Naive thymus-derived CD4-positive, alpha-beta T cell (primary cell): ENCODE measurements at regions of chr1 and their contacts with region 1.

Region 1: DNA sequence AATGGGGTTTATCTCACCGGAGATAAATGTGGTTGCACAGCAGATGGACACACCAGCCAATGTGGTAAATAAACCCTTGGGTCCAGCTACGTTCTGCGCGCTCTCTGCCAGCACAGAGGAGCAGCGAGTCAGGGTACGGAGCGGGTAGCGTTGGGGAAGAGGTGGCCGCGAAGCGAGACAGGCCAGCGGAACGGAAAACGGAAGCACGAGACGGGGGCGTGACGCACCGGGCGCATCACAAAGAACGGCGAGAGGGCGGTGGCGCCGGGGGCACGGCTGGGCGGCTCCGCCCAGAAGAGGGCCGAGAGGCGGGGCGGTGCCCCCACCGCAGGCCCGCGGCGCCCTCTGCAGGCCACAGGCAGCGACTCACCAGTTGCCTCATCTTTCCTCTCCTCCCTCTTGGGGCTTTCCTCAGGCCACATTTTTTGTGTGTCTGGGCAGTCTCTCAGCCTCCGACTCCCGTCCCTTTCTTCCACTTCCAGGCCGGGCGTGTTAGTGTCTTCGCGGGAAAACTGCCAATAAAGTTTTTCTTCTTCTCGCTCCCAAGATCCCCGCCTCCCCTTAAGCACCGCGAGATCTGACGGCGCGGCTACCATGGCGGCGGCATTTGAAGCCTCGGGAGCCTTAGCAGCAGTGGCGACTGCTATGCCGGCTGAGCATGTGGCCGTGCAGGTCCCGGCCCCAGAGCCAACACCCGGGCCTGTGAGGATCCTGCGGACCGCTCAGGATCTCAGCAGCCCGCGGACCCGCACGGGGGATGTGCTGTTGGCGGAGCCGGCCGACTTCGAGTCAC is at the start of gene DDX20:
- DNase-seq: peak; percentile 92 to 97 (median 95)
- ATAC-seq: peak; percentile 97
- H3K4me3 ChIP-seq: peak within 1 kb of the TSS; percentile 87
- H3K4me3 Mint-ChIP-seq: peak within 1 kb of the TSS; percentile 86 to 100 (median 94)
- H3K27ac ChIP-seq: peak within 1 kb of the TSS; percentile 92
- H3K27ac Mint-ChIP-seq: peak within 1 kb of the TSS; percentile 94 to 100 (median 99)
- H3K4me1 ChIP-seq: peaks cover 4 to 18% of the 10 kb centered on the region in 2 donors
- H3K4me1 Mint-ChIP-seq: peaks cover 24 to 49% (median 39%) of the 10 kb centered on the region in 7 donors
- H3K27me3 ChIP-seq: no peaks in the 10 kb centered on the region
- H3K27me3 Mint-ChIP-seq: peaks cover 0 to 2% (median 0%) of the 10 kb centered on the region in 5 donors
- total RNA-seq, gene DDX20: 12.7 to 27.0 (median 18.7) TPM

Region 2: GRCh38 chr1:110872745-110873720 is 882.5 kb before region 1 on chr1 and contains the start of gene CD53:
- CTCF ChIA-PET with region 1: no interaction called
- POLR2A ChIA-PET with region 1: no interaction called
- intact Hi-C with region 1: loop called (anchors 2 to 10 kb)
- DNase-seq: peak in 8 of 9 donors; percentile 19 to 82 (median 76)
- ATAC-seq: peak; percentile 86
- H3K4me3 ChIP-seq: peak within 1 kb of the TSS; percentile 84
- H3K4me3 Mint-ChIP-seq: peak within 1 kb of the TSS; percentile 94 to 100 (median 96)
- H3K27ac ChIP-seq: peak within 1 kb of the TSS; percentile 91
- H3K27ac Mint-ChIP-seq: peak within 1 kb of the TSS; percentile 95 to 99 (median 98)
- H3K4me1 ChIP-seq: peaks cover 24 to 48% of the 10 kb centered on the region in 2 donors
- H3K4me1 Mint-ChIP-seq: peaks cover 34 to 72% (median 52%) of the 10 kb centered on the region in 7 donors
- H3K27me3 ChIP-seq: no peaks in the 10 kb centered on the region
- H3K27me3 Mint-ChIP-seq: no peaks in the 10 kb centered on the region
- total RNA-seq, gene CD53: 237 to 513 (median 287) TPM

Region 3: GRCh38 chr1:111214074-111214801 is 541.3 kb before region 1 on chr1:
- CTCF ChIA-PET with region 1: no interaction called
- POLR2A ChIA-PET with region 1: no interaction called
- intact Hi-C with region 1: loop called in 1 of 2 experiments (anchors 1 kb)
- DNase-seq: no peak
- ATAC-seq: no peak
- H3K4me3 ChIP-seq: peak overlapping the region; percentile 12
- H3K4me3 Mint-ChIP-seq: peak overlapping the region; percentile 60 to 88 (median 81)
- H3K27ac ChIP-seq: peak overlapping the region; percentile 75
- H3K27ac Mint-ChIP-seq: peak overlapping the region; percentile 94 to 100 (median 97)
- H3K4me1 ChIP-seq: peaks cover 65 to 67% of the 10 kb centered on the region in 2 donors
- H3K4me1 Mint-ChIP-seq: peaks cover 66 to 98% (median 93%) of the 10 kb centered on the region in 7 donors
- H3K27me3 ChIP-seq: no peaks in the 10 kb centered on the region
- H3K27me3 Mint-ChIP-seq: peaks cover 0 to 2% (median 0%) of the 10 kb centered on the region in 5 donors

Region 4: DNA sequence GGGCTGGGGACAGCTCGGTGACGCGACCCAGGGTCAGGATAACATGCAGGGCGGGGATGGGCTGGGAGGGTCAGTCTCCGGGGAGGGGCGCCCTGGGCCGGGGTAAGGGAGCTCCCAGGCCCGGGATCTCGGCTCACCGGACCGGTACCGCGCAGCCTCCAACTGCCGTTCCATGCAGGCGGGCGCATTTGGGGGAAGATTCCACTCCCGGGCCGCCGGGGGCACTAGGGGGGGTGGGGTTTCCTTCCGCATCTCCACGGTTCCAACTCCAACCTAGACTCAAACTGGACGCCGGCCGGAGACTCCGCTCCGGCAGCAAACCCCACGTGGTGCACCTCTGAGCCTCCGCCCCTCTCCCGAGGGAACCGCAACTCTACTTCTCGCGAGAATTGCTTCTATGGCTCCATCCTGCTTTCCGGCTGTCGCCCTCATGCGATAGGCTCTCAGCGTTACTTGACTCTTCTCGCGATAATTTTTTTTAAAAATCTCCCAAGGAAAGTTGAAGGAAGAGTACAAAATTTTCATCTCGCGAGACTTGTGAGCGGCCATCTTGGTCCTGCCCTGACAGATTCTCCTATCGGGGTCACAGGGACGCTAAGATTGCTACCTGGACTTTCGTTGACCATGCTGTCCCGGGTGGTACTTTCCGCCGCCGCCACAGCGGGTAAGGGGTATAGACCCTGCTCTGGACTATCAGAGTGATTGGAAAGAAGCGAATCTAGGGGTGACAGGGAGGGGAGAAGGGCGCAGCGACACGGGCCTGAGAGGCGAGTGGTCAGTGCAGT is 306.4 kb before region 1 on chr1 and contains the starts of genes ATP5PB and WDR77:
- CTCF ChIA-PET with region 1: no interaction called
- POLR2A ChIA-PET with region 1: interaction called, 3 read pairs
- intact Hi-C with region 1: loop called (anchors 1 kb)
- DNase-seq: peak; percentile 66 to 97 (median 94)
- ATAC-seq: peak; percentile 98
- H3K4me3 ChIP-seq: peak within 1 kb of the TSS; percentile 89
- H3K4me3 Mint-ChIP-seq: peak within 1 kb of the TSS; percentile 97 to 100 (median 100)
- H3K27ac ChIP-seq: peak within 1 kb of the TSS; percentile 98
- H3K27ac Mint-ChIP-seq: peak within 1 kb of the TSS; percentile 95 to 100 (median 99)
- H3K4me1 ChIP-seq: peaks cover 51 to 55% of the 10 kb centered on the region in 2 donors
- H3K4me1 Mint-ChIP-seq: peaks cover 43 to 92% (median 78%) of the 10 kb centered on the region in 7 donors
- H3K27me3 ChIP-seq: no peaks in the 10 kb centered on the region
- H3K27me3 Mint-ChIP-seq: no peaks in the 10 kb centered on the region
- total RNA-seq, gene ATP5PB: 64.9 to 298 (median 98.7) TPM
- total RNA-seq, gene WDR77: 20.7 to 39.9 (median 29.5) TPM

Region 5: DNA sequence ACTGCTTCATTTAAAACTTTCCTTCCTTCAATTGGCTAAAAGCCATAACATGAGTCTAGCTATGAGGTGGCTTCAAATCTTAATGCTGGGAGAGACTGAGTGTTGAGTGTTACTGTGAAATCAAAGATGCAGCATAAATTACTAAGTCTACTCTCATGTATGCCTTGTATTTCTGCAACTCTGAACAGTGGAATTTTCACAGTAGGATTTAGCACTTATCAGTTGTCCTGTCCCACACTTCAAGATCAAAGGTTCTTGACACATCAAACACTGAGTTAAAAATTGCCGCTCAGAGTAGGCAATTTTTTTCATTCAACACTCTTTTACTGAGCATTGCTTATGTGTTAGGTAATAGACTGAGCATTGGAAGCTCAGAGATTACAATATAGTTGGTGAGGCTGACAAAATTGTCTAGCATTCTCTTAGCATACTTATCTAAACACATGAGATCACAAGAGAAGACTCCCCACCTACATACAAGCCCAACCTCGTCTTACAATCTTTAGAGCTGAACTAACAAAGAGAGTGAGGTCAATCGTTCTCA is 195.7 kb before region 1 on chr1:
- CTCF ChIA-PET with region 1: no interaction called
- POLR2A ChIA-PET with region 1: no interaction called
- intact Hi-C with region 1: loop called in 1 of 2 experiments (anchors 5 kb)
- DNase-seq: no peak
- ATAC-seq: no peak
- H3K4me3 ChIP-seq: no peak overlapping the region
- H3K4me3 Mint-ChIP-seq: no peak overlapping the region
- H3K27ac ChIP-seq: no peak overlapping the region
- H3K27ac Mint-ChIP-seq: no peak overlapping the region
- H3K4me1 ChIP-seq: no peaks in the 10 kb centered on the region
- H3K4me1 Mint-ChIP-seq: peaks cover 0 to 6% (median 4%) of the 10 kb centered on the region in 7 donors
- H3K27me3 ChIP-seq: no peaks in the 10 kb centered on the region
- H3K27me3 Mint-ChIP-seq: peaks cover 0 to 4% (median 0%) of the 10 kb centered on the region in 5 donors

Region 6: GRCh38 chr1:111720274-111720976 is 35.1 kb before region 1 on chr1:
- CTCF ChIA-PET with region 1: interaction called, 18 read pairs
- POLR2A ChIA-PET with region 1: interaction called, 4 read pairs
- intact Hi-C with region 1: loop called (anchors 1 kb)
- DNase-seq: no peak
- ATAC-seq: no peak
- H3K4me3 ChIP-seq: no peak overlapping the region
- H3K4me3 Mint-ChIP-seq: no peak overlapping the region
- H3K27ac ChIP-seq: no peak overlapping the region
- H3K27ac Mint-ChIP-seq: peak overlapping the region in 7 of 9 donors; percentile 31 to 80 (median 52)
- H3K4me1 ChIP-seq: peaks cover 0 to 8% of the 10 kb centered on the region in 2 donors
- H3K4me1 Mint-ChIP-seq: peaks cover 9 to 31% (median 19%) of the 10 kb centered on the region in 7 donors
- H3K27me3 ChIP-seq: no peaks in the 10 kb centered on the region
- H3K27me3 Mint-ChIP-seq: no peaks in the 10 kb centered on the region